ENCODE measurements at regions of chr12 and their contacts with region 1.

Region 1: DNA sequence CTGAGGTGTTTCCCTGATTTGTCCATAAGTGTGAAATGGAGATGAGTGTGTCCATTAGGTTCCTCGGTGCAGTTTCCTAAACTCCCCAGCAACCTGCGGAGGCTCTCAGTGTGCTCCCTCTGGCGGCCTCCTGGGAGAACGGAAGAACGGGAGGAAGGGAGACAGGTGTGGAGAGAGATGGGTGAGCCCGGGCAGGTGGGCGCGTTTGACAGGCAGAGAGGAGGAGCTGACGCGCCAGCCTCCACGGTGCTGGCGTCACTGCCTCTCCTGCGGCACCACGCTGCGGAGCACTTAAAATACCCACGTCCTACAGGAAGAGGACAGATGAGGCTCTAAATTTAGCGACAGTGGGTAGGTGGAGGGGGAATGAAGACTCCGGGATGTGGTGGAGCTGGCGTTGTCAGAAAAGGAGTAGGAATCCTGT is 26.8 kb upstream of the PEX5 start:
- DNase-seq: peak; percentile 46 to 70
- H3K4me3 ChIP-seq: no peak overlapping the region; a peak in 1 of 8 replicates
- H3K27ac ChIP-seq: no peak overlapping the region
- H3K4me1 ChIP-seq: no peaks in the 10 kb centered on the region
- H3K27me3 ChIP-seq: no peaks in the 10 kb centered on the region; a peak in 2 of 7 replicates
- CTCF ChIP-seq: peak; percentile 66 to 84 (median 74)
- EP300 ChIP-seq: no peak; a peak in 1 of 3 replicates
- POLR2A ChIP-seq: no peak
- RAD21 ChIP-seq: peak; percentile 46 to 52

Region 2: GRCh38 chr12:7180685-7181084 is 18.0 kb after region 1 on chr12:
- CTCF ChIA-PET with region 1: interaction called, 10 read pairs
- POLR2A ChIA-PET with region 1: no interaction called
- DNase-seq: no peak
- H3K4me3 ChIP-seq: no peak overlapping the region
- H3K27ac ChIP-seq: no peak overlapping the region
- H3K4me1 ChIP-seq: no peaks in the 10 kb centered on the region
- H3K27me3 ChIP-seq: no peaks in the 10 kb centered on the region
- CTCF ChIP-seq: no peak
- EP300 ChIP-seq: no peak
- POLR2A ChIP-seq: no peak
- RAD21 ChIP-seq: no peak

Region 3: DNA sequence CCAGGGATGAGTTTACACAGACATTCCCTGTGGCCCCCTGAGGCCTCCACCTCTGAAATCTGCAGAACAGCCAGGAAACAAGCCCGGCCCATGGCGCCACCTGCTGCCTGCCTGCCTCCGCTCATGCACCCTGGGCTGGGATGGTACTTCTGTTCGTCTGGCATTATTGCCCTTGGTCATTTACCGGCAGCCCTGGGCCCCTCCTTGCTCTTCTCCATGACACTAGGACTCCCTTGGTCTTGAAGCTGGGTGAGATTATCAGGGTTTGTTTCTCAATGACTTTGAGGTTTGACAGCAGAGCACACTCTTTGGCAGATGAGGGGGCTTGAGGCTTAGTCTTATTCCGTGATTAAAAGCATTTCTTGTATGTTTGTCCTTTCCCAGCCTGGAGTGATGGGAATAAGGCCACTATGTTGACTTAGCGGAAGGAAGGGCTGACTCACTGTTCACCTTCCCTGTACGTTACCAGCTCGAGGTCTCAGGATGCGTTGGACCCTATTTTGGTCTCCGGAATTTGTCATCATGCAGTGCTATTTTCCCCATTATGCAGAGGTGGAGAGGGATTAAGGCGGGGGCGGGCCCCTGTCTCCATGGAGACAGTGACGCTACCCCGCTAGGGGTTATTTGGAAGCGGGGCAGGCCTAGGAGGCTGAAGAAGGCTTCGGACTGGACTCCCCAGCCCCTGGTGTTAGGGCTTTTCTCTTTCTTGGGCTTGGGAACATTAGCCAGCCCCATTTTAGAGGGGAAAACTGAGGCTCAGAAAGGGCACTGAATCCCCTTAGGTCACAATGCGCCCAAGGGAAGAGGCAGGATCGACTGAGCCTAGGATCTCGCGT is 26.1 kb after region 1 on chr12:
- CTCF ChIA-PET with region 1: interaction called, 5 read pairs
- POLR2A ChIA-PET with region 1: interaction called, 11 read pairs
- DNase-seq: peak; percentile 64 to 90
- H3K4me3 ChIP-seq: peak overlapping the region; percentile 62 to 89 (median 83)
- H3K27ac ChIP-seq: no peak overlapping the region
- H3K4me1 ChIP-seq: peaks cover 0 to 13% (median 3%) of the 10 kb centered on the region in 4 experiments; a peak in 4 of 7 replicates
- H3K27me3 ChIP-seq: no peaks in the 10 kb centered on the region
- CTCF ChIP-seq: peak; percentile 91 to 97 (median 94)
- EP300 ChIP-seq: no peak; a peak in 1 of 3 replicates
- POLR2A ChIP-seq: no peak
- RAD21 ChIP-seq: peak; percentile 83 to 86